ENCODE measurements at regions of chrX and their contacts with region 1.

Region 1: GRCh38 chrX:101925733-101926132 is 6.1 kb downstream of the ZMAT1 start:
- DNase-seq: no peak
- ATAC-seq: no peak
- H3K4me3 ChIP-seq: no peak overlapping the region
- H3K27ac ChIP-seq: no peak overlapping the region
- H3K4me1 ChIP-seq: peaks cover under 1% of the 10 kb centered on the region; the same call in 1 of the 2 replicates
- H3K27me3 ChIP-seq: no peaks in the 10 kb centered on the region
- CTCF ChIP-seq: no peak

Region 2: GRCh38 chrX:102899940-102900916 is 974.5 kb after region 1 on chrX:
- CTCF ChIA-PET with region 1: no interaction called
- POLR2A ChIA-PET with region 1: no interaction called
- in situ Hi-C with region 1: no loop called
- intact Hi-C with region 1: loop called (anchors 10 kb)
- DNase-seq: peak; percentile 46
- ATAC-seq: peak; percentile 93
- H3K4me3 ChIP-seq: no peak overlapping the region
- H3K27ac ChIP-seq: no peak overlapping the region
- H3K4me1 ChIP-seq: no peaks in the 10 kb centered on the region
- H3K27me3 ChIP-seq: no peaks in the 10 kb centered on the region
- CTCF ChIP-seq: peak; percentile 73

Measured in Panc1 (cell line).